ENCODE measurements at regions of chr9 and their contacts with region 1.

Region 1: DNA sequence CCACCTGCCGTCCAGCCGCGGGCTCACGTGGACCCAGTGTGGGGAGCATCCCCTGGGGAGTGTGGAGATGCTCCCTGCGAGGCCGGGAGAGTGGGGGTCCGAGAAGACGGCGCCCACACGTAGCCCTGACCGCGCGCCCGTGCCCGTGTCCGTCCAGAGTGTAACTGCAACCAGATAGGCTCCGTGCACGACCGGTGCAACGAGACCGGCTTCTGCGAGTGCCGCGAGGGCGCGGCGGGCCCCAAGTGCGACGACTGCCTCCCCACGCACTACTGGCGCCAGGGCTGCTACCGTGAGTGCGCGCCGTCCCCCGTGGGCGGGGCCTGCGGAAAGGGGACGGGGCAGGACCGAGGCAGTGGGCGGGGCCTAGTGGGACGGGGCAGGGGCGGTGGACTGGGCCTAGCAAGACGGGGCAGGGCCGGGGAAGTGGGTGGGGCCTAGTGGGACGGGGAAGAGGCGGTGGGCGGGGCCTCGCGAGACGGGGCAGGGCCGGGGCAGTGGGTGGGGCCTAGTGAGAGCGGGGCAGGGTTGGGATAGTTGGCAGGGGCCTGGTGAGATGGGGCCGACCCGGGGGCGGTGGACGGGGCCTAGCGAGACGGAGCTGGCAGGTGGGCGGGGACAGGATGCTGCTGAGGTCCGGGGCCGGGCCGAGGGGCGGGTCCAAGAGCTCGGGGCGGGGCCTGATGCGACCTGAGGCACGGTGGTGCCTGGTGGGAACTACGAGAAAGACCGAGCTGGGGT is 79.1 kb downstream of the NTNG2 start:
- DNase-seq: peak; percentile 98
- ATAC-seq: peak; percentile 87
- H3K4me3 ChIP-seq: peak overlapping the region in 4 of 5 experiments; percentile 67 to 82 (median 76)
- H3K4me3 Mint-ChIP-seq: peak overlapping the region; percentile 97
- H3K27ac ChIP-seq: peak overlapping the region in 1 of 2 donors; percentile 18
- H3K27ac Mint-ChIP-seq: peak overlapping the region; percentile 97
- H3K4me1 ChIP-seq: peaks cover 7 to 24% of the 10 kb centered on the region in 2 donors
- H3K4me1 Mint-ChIP-seq: peaks cover 17% of the 10 kb centered on the region
- H3K27me3 ChIP-seq: peaks cover 0 to 11% (median 2%) of the 10 kb centered on the region in 4 experiments
- H3K27me3 Mint-ChIP-seq: peaks cover 3% of the 10 kb centered on the region
- CTCF ChIP-seq: no peak

Region 2: GRCh38 chr9:131277910-131278701 is 962.8 kb before region 1 on chr9:
- CTCF ChIA-PET with region 1: no interaction called
- POLR2A ChIA-PET with region 1: no interaction called
- intact Hi-C with region 1: loop called (anchors 5 kb)
- DNase-seq: peak; percentile 82
- ATAC-seq: peak; percentile 58
- H3K4me3 ChIP-seq: peak overlapping the region in 4 of 5 experiments; percentile 11 to 95 (median 78)
- H3K4me3 Mint-ChIP-seq: peak overlapping the region; percentile 85
- H3K27ac ChIP-seq: peak overlapping the region; percentile 28 to 71
- H3K27ac Mint-ChIP-seq: peak overlapping the region; percentile 87
- H3K4me1 ChIP-seq: peaks cover 33 to 36% of the 10 kb centered on the region in 2 donors
- H3K4me1 Mint-ChIP-seq: peaks cover 40% of the 10 kb centered on the region
- H3K27me3 ChIP-seq: peaks cover 0 to 16% (median 5%) of the 10 kb centered on the region in 4 experiments
- H3K27me3 Mint-ChIP-seq: peaks cover 10% of the 10 kb centered on the region
- CTCF ChIP-seq: no peak

Region 3: DNA sequence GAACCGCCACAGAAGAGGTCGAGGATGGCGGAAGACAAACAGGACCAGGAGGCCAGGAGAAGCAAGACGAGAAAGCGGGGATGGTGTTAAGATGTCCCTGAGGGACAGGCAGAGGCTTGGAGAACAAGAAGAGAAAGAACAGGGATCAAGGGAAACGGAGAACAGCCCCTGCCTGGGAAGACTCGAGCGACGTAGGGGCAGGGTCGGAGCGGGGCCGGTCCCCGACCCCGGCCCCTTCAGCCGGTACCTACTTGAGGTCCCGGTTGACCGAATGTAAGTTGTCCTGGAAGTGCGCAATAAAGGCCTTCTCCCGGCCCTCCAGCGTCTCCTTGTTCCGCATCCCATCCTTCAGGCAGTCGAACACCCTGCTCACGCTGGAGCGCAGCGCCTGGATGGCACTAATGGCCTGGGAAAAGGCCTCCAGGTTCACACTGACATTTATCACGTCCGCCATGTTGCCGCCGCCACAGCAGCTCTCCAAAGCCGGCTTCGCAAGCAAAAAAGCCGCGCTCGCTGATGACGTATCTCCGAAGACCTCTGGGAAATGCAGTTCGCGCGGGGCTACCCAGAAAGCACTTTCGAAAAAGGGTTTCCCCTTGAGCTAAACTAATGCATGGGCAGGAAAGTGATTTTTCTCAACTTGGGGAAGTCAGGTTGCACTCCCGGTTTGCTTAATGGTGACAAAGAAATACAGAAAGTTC is 161.4 kb before region 1 on chr9 and contains the start of gene MED27:
- CTCF ChIA-PET with region 1: no interaction called
- POLR2A ChIA-PET with region 1: no interaction called
- intact Hi-C with region 1: loop called (anchors 2 kb)
- DNase-seq: peak; percentile 95
- ATAC-seq: peak; percentile 99
- H3K4me3 ChIP-seq: peak within 1 kb of the TSS; percentile 60 to 89 (median 81)
- H3K4me3 Mint-ChIP-seq: peak within 1 kb of the TSS; percentile 96
- H3K27ac ChIP-seq: peak within 1 kb of the TSS; percentile 13 to 80
- H3K27ac Mint-ChIP-seq: peak within 1 kb of the TSS; percentile 94
- H3K4me1 ChIP-seq: peaks cover 15 to 17% of the 10 kb centered on the region in 2 donors
- H3K4me1 Mint-ChIP-seq: peaks cover 28% of the 10 kb centered on the region
- H3K27me3 ChIP-seq: peaks cover 0 to 5% (median 0%) of the 10 kb centered on the region in 4 experiments
- H3K27me3 Mint-ChIP-seq: peaks cover 4% of the 10 kb centered on the region
- CTCF ChIP-seq: no peak
- total RNA-seq, gene MED27: 17.4 and 24.4 TPM in 2 replicates

Region 4: GRCh38 chr9:132228062-132228461 is 12.9 kb before region 1 on chr9:
- CTCF ChIA-PET with region 1: interaction called, 11 read pairs
- POLR2A ChIA-PET with region 1: no interaction called
- intact Hi-C with region 1: no loop called
- DNase-seq: no peak
- ATAC-seq: no peak
- H3K4me3 ChIP-seq: no peak overlapping the region
- H3K4me3 Mint-ChIP-seq: no peak overlapping the region
- H3K27ac ChIP-seq: no peak overlapping the region
- H3K27ac Mint-ChIP-seq: no peak overlapping the region
- H3K4me1 ChIP-seq: no peaks in the 10 kb centered on the region
- H3K4me1 Mint-ChIP-seq: no peaks in the 10 kb centered on the region
- H3K27me3 ChIP-seq: peaks cover 0 to 4% (median 1%) of the 10 kb centered on the region in 4 experiments
- H3K27me3 Mint-ChIP-seq: peaks cover 13% of the 10 kb centered on the region
- CTCF ChIP-seq: no peak

Region 5: DNA sequence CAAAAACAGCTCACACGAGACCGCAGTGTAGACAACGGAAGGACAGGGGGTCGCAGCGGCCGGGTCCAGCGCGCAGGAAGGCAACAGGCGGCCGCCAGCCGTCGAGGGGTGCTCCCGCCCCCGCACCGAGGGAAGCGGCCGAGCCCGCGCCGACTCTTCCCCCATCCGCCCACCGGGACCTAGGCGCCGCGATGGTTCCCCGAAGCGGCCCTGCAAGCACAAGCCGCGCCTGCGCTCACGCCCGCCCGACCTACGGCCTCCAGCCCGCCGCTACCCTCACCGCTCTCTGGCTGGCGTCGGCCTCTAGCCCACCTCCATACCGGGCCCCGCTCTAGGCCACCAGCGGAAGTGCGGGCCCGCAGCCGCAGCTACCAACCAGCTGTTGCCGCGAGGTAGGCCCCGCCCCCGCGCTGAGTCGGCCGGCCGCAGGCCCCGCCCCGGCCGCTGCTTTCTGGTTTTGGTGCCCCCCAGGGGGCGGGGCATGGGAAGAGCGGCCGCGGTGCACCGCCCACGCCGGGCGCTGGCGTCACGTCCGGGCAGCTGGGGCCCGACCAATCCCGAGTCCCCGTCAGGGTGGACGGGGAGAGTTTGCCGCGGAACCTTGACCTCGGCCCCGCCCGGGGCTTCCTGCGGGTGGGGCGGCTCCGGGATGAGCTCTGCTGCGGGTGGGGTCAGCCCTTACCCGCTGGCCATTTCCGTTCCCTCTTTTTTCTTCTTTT is 113.9 kb after region 1 on chr9 and contains the start of gene SETX:
- CTCF ChIA-PET with region 1: interaction called, 3 read pairs
- POLR2A ChIA-PET with region 1: no interaction called
- intact Hi-C with region 1: loop called (anchors 1 kb)
- DNase-seq: peak; percentile 97
- ATAC-seq: peak; percentile 92
- H3K4me3 ChIP-seq: peak within 1 kb of the TSS; percentile 61 to 93 (median 88)
- H3K4me3 Mint-ChIP-seq: peak within 1 kb of the TSS; percentile 95
- H3K27ac ChIP-seq: peak within 1 kb of the TSS; percentile 88 to 97
- H3K27ac Mint-ChIP-seq: peak within 1 kb of the TSS; percentile 97
- H3K4me1 ChIP-seq: peaks cover 44 to 50% of the 10 kb centered on the region in 2 donors
- H3K4me1 Mint-ChIP-seq: peaks cover 52% of the 10 kb centered on the region
- H3K27me3 ChIP-seq: no peaks in the 10 kb centered on the region
- H3K27me3 Mint-ChIP-seq: no peaks in the 10 kb centered on the region
- CTCF ChIP-seq: no peak
- total RNA-seq, gene SETX: 105 and 114 TPM in 2 replicates

Region 6: DNA sequence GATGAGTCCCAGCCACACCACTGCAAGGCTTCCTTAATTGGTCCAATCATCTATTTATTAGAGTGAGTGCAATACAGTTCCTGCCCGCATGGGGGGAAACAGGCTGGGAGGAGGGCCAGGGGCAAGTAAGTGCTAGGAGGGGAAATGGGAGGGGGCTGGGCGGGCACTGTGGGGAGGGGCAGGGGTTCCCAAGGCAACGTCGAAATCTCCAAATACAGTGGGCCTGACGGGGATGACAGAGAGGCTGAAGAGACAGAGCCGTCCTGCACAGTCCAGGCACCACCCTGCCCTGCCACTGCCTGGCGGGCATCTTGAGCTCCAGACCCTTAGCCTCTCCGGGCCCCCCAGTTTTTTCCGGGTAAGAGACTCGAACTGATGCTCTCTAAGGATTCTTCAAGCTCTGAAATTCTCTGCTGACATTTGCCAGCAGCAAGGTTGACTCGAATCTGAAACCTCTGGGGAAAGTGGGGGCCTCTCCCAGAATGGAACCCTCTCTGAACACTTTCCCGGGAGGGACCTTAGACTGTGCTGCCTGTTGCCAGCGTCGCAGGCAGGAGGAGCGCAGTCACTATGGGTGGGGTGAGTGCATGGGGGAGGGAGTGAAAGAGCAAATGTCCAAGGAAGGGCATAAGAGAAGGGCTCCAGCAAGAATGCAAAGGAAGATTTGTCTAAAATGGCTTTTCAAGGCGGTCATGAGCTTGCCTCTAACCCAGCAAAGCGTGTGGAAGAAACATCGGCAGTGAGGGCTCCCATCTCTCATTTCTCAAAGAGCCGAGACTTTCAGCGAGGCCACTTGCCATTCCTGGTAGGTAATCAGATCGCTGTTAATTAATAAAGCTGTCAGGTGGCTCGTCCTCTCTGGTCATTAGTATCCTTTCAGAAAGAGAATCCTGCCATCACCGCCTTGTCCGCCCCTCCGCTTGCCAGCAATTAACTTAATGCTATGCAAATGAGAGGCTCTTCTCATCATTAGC is 528.3 kb after region 1 on chr9:
- CTCF ChIA-PET with region 1: interaction called, 3 read pairs
- POLR2A ChIA-PET with region 1: no interaction called
- intact Hi-C with region 1: loop called (anchors 5 kb)
- DNase-seq: peak; percentile 78
- ATAC-seq: peak; percentile 74
- H3K4me3 ChIP-seq: peak overlapping the region; percentile 76 to 96 (median 85)
- H3K4me3 Mint-ChIP-seq: peak overlapping the region; percentile 100
- H3K27ac ChIP-seq: peak overlapping the region; percentile 74 to 84
- H3K27ac Mint-ChIP-seq: peak overlapping the region; percentile 100
- H3K4me1 ChIP-seq: peaks cover 10 to 11% of the 10 kb centered on the region in 2 donors
- H3K4me1 Mint-ChIP-seq: peaks cover 9% of the 10 kb centered on the region
- H3K27me3 ChIP-seq: no peaks in the 10 kb centered on the region
- H3K27me3 Mint-ChIP-seq: peaks cover 5% of the 10 kb centered on the region
- CTCF ChIP-seq: peak; percentile 73